Activated naive CD4-positive, alpha-beta T cell treated with anti-CD3 and anti-CD28 coated beads for 36 hours (primary cell): ENCODE measurements at regions of chr12 and their contacts with region 1.

Region 1: DNA sequence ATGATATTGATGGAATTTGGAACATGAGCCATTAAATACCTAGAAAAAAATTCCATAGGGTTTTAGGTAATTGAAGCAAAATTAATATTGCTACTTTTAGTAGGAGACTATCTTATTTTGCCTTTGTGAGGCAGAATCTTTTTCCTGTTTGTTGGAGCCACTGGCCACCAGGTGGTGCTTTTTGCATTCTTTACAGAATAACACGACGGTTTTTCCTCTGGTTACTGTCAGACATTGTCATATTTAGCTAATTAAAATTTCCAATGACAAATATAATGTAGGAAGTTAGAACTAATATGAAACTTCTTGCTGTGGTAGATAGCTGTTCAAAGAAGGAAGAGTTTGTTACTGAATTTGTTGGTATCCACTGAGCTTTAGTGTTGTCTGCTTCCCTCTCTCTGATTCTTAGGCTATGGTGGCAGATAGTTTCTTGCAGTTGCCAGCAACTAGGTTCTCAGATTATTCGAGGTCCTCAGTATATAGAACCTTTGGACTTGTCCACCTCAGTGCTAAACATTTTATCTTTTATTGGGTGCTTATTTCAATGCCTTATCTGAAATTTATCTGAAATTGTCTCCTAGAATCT is 25.7 kb downstream of the RAB21 start:
- DNase-seq: peak; percentile 63
- H3K4me3 Mint-ChIP-seq: no peak overlapping the region
- H3K27ac Mint-ChIP-seq: peak overlapping the region; percentile 47
- H3K4me1 Mint-ChIP-seq: peaks cover 5% of the 10 kb centered on the region
- H3K27me3 Mint-ChIP-seq: no peaks in the 10 kb centered on the region

Region 2: DNA sequence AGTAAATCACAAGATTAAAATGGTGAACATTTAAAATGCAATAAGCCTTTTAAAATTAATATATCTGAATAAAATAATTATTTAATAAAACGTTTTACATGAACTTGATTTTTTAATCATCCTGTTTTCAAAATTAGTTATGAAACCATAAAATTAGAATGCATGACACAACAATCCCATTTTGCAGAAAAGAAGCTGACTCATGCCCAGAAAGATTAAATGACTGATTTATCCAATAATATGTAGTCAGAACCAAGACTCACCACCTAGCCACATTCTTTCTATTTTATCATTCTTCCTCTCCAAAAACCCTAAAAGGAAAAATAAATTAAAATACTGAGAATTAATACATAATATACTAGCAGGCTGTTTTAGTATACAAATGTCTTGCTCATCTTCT is 423.8 kb before region 1 on chr12:
- CTCF ChIA-PET with region 1: no interaction called
- intact Hi-C with region 1: no loop called
- DNase-seq: no peak
- H3K4me3 Mint-ChIP-seq: no peak overlapping the region
- H3K27ac Mint-ChIP-seq: no peak overlapping the region
- H3K4me1 Mint-ChIP-seq: no peaks in the 10 kb centered on the region
- H3K27me3 Mint-ChIP-seq: peaks cover 9% of the 10 kb centered on the region

Region 3: GRCh38 chr12:71846322-71846940 is 66.1 kb after region 1 on chr12:
- CTCF ChIA-PET with region 1: interaction called, 27 read pairs
- intact Hi-C with region 1: loop called (anchors 1 kb)
- DNase-seq: no peak
- H3K4me3 Mint-ChIP-seq: no peak overlapping the region
- H3K27ac Mint-ChIP-seq: no peak overlapping the region
- H3K4me1 Mint-ChIP-seq: peaks cover 39% of the 10 kb centered on the region
- H3K27me3 Mint-ChIP-seq: no peaks in the 10 kb centered on the region

Region 4: DNA sequence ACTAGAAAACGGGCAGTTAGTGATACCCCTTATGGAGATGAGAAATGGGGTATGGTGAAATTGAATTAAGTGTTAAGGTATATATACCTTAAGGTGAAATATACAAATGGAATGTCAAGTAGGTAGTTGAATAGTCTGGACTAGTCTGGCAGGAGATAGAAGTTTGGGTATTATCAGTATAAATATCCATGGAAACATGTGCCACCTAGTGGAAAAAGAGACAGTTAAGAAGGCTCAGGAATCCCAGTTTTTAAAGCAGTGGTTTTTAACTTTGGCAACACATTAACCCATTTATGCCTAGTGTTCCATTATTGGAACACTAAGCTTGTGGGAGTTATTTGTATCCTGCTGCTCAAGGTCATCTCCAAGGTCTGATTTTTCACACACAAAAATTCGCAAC is 119.8 kb after region 1 on chr12:
- CTCF ChIA-PET with region 1: no interaction called
- intact Hi-C with region 1: loop called (anchors 1 kb)
- DNase-seq: no peak
- H3K4me3 Mint-ChIP-seq: no peak overlapping the region
- H3K27ac Mint-ChIP-seq: no peak overlapping the region
- H3K4me1 Mint-ChIP-seq: peaks cover 17% of the 10 kb centered on the region
- H3K27me3 Mint-ChIP-seq: no peaks in the 10 kb centered on the region

Region 5: DNA sequence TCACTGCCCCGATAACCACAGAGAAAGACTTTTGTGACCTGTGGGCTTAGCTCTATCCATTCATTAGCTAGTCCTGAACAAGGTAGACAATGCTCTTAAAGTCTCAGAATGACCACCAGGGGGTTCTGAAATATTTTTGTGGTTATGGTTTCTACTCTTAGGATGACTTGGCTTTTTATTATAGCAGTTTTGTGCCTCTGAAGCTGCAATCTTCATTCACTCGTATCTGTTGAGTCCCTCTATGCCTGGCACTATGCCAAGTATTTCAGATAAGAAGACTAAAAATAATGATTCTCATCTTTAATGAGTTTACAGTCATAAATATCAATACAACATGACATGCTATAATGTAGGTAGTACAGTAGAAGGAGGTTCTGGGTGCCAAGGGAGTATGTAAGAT is 361.1 kb after region 1 on chr12:
- CTCF ChIA-PET with region 1: no interaction called
- intact Hi-C with region 1: no loop called
- DNase-seq: no peak
- H3K4me3 Mint-ChIP-seq: no peak overlapping the region
- H3K27ac Mint-ChIP-seq: no peak overlapping the region
- H3K4me1 Mint-ChIP-seq: no peaks in the 10 kb centered on the region
- H3K27me3 Mint-ChIP-seq: no peaks in the 10 kb centered on the region